Esophagus muscularis mucosa (tissue), 4 donors: ENCODE measurements at regions of chr2 and their contacts with region 1.

Region 1: DNA sequence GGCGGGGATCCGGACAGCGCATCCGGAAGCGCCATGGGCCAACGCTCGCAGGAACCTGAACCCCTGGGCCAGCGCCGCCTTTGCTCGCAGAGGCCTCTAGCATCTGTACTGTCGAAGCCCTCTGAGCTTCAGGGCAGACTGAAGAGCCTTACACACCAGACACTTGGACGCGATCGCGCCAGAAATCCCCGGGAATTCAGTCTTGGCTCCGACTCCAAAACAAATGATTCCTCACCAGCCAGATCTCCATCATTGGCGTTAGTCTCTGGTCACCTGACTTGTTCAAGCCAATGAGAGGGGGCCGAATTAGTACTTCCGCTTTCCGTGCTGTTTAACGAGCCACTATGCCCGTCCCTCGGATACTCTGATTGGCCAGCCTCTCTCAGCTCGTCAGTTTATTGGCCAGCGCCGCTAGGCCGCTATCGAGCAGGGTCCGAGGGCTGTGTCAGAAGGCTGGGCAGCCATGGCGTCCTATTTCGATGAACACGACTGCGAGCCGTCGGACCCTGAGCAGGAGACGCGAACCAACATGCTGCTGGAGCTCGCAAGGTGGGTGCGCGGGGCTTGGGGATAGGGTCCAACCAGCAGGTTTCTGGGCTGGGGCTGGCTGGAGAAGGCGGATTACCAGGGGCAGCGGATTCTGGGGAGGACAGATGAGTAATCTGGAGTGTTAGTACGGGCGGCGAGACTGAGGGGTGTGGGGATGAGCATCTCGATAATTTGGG is at the start of gene RNF181:
- DNase-seq: peak; percentile 99
- H3K4me3 ChIP-seq: peak within 1 kb of the TSS; percentile 65 to 94 (median 80)
- H3K27ac ChIP-seq: peak within 1 kb of the TSS; percentile 88 to 97 (median 90)
- H3K4me1 ChIP-seq: peaks cover 44 to 61% (median 53%) of the 10 kb centered on the region in 4 donors
- H3K27me3 ChIP-seq: no peaks in the 10 kb centered on the region
- CTCF ChIP-seq: no peak
- EP300 ChIP-seq: no peak
- POLR2A ChIP-seq: peak; percentile 80
- total RNA-seq, gene RNF181: 133 to 142 (median 138) TPM

Region 2: DNA sequence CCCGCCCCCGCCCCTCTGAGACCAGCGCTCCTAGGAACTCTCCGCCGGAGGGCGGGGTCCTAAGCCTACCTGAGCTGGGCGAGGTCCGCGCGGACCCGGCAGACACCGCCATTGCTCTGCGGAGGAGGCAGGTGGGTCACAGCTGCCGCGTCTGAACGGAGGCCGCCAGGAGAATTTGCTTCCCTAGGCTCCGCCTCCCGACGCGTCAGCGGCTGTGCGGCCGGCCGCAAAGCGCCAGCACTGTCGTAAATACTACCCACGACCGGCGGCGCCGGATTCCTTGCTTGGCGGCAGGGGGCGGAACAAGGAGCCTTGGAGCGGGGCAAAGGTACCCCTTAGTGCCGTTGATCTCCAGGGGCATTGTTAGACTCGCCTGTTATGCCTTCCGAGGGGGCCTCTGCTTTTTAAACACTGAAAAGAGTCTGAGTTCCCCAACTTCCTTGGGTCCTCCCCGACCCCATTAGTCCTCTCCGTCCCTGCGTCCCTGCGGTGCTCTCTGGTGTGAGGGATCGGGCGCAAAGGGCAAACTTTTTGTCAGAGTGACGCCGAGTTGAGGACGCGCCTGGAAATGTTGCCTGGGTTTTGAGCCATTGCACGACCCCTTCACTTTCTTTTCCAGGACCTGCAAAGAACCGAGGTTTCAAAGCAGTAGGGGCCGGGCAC is 34.0 kb before region 1 on chr2 and contains the start of gene GGCX:
- intact Hi-C with region 1: loop called (anchors 5 kb)
- DNase-seq: peak; percentile 98
- H3K4me3 ChIP-seq: peak within 1 kb of the TSS; percentile 70 to 93 (median 79)
- H3K27ac ChIP-seq: peak within 1 kb of the TSS; percentile 86 to 89 (median 86)
- H3K4me1 ChIP-seq: peaks cover 19 to 33% (median 26%) of the 10 kb centered on the region in 4 donors
- H3K27me3 ChIP-seq: no peaks in the 10 kb centered on the region
- CTCF ChIP-seq: peak; percentile 31 to 67 (median 46)
- EP300 ChIP-seq: no peak
- POLR2A ChIP-seq: peak; percentile 77
- total RNA-seq, gene GGCX: 15.0 to 25.3 (median 19.5) TPM